Esophagus muscularis mucosa (tissue), 4 donors: ENCODE measurements at regions of chr12 and their contacts with region 1.

Region 1: GRCh38 chr12:122123051-122123760 is 44.6 kb downstream of the MLXIP start:
- DNase-seq: no peak
- H3K4me3 ChIP-seq: peak overlapping the region in 2 of 4 donors; percentile 10 to 30
- H3K27ac ChIP-seq: peak overlapping the region in 2 of 4 donors; percentile 27 to 28
- H3K4me1 ChIP-seq: peaks cover 28 to 80% (median 71%) of the 10 kb centered on the region in 4 donors
- H3K27me3 ChIP-seq: no peaks in the 10 kb centered on the region
- CTCF ChIP-seq: peak; percentile 75 to 81 (median 78)
- EP300 ChIP-seq: no peak
- POLR2A ChIP-seq: no peak

Region 2: GRCh38 chr12:122051231-122051876 is 71.9 kb before region 1 on chr12:
- intact Hi-C with region 1: loop called (anchors 1 kb)
- DNase-seq: no peak
- H3K4me3 ChIP-seq: no peak overlapping the region
- H3K27ac ChIP-seq: peak overlapping the region; percentile 63 to 79 (median 76)
- H3K4me1 ChIP-seq: peaks cover 23 to 37% (median 33%) of the 10 kb centered on the region in 4 donors
- H3K27me3 ChIP-seq: no peaks in the 10 kb centered on the region
- CTCF ChIP-seq: no peak
- EP300 ChIP-seq: no peak
- POLR2A ChIP-seq: no peak

Region 3: GRCh38 chr12:122200541-122201175 is 77.5 kb after region 1 on chr12:
- intact Hi-C with region 1: no loop called
- DNase-seq: no peak
- H3K4me3 ChIP-seq: no peak overlapping the region
- H3K27ac ChIP-seq: no peak overlapping the region
- H3K4me1 ChIP-seq: peaks cover 15 to 31% (median 22%) of the 10 kb centered on the region in 4 donors
- H3K27me3 ChIP-seq: peaks cover 5 to 67% (median 33%) of the 10 kb centered on the region in 4 donors
- CTCF ChIP-seq: no peak
- EP300 ChIP-seq: no peak
- POLR2A ChIP-seq: no peak

Region 4: DNA sequence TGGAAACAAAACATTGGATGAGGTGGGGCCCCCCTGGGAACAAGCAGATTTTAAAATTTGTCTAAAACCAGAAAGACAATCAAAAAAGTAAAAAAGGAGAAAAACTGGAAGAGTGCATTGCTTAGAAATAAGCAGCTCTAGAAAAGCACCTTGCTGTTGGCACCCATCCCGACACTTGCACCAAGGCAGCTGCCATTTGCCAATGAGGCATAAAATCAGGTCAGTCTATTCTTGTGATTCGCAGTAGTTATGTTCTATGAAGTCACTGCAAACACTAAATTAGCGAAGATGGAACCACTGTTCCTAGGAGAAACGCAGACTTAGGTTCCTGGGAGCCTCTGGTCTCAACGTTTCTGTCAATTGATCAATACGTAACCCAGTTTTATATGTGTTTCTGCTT is 126.8 kb after region 1 on chr12:
- intact Hi-C with region 1: no loop called
- DNase-seq: no peak
- H3K4me3 ChIP-seq: no peak overlapping the region
- H3K27ac ChIP-seq: no peak overlapping the region
- H3K4me1 ChIP-seq: no peaks in the 10 kb centered on the region
- H3K27me3 ChIP-seq: no peaks in the 10 kb centered on the region
- CTCF ChIP-seq: no peak
- EP300 ChIP-seq: no peak
- POLR2A ChIP-seq: no peak